ENCODE measurements at regions of chr19 and their contacts with region 1.

Region 1: DNA sequence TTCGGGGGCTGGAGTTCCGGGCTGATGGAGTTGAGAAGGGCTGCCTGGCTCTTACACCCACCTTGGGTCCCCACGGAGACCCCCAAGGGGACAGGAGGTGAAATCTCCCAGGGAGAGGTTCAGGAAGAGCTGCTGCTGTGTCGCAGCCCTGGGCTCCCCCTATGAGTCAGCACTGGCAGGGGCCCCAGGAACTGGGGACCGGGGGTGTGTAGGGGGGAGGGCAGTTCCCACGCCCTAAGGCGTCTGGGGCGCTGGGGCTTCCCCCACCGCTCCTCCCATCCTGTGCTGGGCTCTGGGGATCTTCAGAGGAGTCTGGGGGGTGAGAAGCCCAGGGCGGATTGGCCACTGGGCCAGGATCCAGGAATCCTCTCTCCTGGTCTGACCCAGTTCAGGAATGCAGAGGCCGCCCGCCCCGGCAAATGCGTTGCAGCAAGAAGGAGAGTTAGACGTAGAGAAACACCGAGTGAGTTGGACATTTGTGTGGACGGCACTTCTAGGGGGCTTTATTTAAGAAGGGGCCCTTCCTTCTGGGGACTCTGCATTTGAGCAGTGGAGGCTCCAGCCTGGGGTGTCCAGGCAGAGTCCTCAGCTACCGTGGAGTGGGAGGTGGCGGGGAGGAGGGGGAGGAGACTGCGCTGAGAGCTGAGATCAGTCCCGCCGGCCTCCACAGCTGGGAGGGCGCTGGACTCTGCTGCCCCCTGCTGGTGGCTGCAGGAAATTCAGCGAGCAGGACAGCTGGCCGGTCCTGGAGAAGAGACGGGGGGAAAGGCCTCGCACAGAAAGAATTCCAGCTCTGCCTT is 15.0 kb upstream of the NANOS3 start:
- DNase-seq: peak; percentile 90
- H3K4me3 ChIP-seq: peak overlapping the region; percentile 39 to 42 (median 40)
- H3K27ac ChIP-seq: peak overlapping the region; percentile 81
- H3K4me1 ChIP-seq: peaks cover 23% of the 10 kb centered on the region
- H3K27me3 ChIP-seq: peaks cover 2% of the 10 kb centered on the region
- CTCF ChIP-seq: peak; percentile 79 to 94

Region 2: DNA sequence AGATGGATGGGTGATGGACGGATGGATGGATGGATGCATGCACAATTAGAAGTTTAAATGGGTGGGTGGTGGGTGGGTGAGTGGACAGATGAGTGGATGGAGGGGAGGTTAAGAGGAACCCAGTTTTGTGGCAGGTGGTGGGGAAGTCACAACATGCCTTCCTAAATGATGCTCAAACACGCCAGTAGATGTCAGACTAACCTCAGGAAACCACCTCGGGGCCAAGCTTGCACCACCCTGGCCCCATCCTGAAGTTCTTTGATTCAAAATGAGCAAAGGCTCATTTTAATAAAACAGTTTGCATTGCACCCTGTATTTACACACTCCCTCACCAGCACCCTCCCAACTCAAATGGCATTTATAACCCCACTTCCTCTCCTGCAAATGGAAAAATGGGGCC is 264.3 kb before region 1 on chr19:
- CTCF ChIA-PET with region 1: no interaction called
- dilution Hi-C with region 1: no loop called
- in situ Hi-C with region 1: loop called (anchors 25 kb)
- intact Hi-C with region 1: loop called (anchors 1 kb)
- DNase-seq: peak; percentile 50
- H3K4me3 ChIP-seq: no peak overlapping the region
- H3K27ac ChIP-seq: no peak overlapping the region
- H3K4me1 ChIP-seq: no peaks in the 10 kb centered on the region
- H3K27me3 ChIP-seq: no peaks in the 10 kb centered on the region
- CTCF ChIP-seq: peak; percentile 44 to 69

Region 3: GRCh38 chr19:13707915-13708314 is 154.0 kb before region 1 on chr19:
- CTCF ChIA-PET with region 1: no interaction called
- dilution Hi-C with region 1: no loop called
- in situ Hi-C with region 1: no loop called
- intact Hi-C with region 1: no loop called
- DNase-seq: no peak
- H3K4me3 ChIP-seq: no peak overlapping the region
- H3K27ac ChIP-seq: no peak overlapping the region
- H3K4me1 ChIP-seq: peaks cover 7% of the 10 kb centered on the region
- H3K27me3 ChIP-seq: no peaks in the 10 kb centered on the region
- CTCF ChIP-seq: no peak

Region 4: DNA sequence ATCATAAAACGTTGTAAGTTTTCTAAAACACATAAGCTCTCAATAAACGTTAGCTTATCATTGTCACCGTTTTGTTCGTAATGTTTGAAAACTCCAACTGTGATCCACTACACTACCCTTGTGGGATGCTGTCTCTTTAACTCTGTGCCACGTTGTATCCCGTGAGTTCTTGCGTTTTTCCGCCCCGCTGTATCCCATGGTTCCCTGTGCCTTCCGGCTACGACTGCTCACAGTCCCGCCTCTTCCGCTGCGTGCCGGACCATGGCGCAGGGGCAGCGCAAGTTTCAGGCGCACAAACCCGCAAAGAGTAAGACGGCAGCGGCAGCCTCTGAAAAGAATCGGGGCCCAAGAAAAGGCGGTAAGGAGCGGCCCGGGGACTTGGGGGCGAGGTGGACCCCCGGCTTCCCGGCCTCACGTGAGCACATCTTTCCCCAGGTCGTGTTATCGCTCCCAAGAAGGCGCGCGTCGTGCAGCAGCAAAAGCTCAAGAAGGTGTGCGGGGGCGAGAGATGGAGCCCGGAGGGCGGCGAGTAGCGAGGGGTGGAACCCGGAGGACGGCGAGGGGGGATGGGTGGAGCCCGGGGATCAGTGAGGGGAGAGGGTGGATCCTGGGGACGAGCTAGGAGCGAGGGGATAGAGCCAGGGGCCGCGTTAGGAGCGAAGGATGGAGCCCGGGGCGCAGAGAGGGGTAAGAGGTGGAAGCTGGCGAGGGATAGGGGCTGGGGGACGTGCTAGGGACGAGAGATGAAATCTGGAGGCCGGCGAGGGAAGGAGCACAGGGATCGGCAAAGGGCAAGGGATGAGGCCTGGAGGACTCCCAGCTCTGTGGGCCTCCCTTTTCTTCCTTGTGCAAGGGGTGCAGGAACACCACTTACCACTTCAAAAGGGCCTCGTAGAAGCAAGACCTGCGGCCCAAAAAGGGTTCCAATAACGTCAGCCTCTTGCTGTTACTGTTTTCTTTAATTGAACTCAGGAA is 87.4 kb before region 1 on chr19 and contains the start of gene C19orf53:
- CTCF ChIA-PET with region 1: interaction called, 21 read pairs
- dilution Hi-C with region 1: no loop called
- in situ Hi-C with region 1: no loop called
- intact Hi-C with region 1: no loop called
- DNase-seq: peak; percentile 89
- H3K4me3 ChIP-seq: peak within 1 kb of the TSS; percentile 80 to 98 (median 84)
- H3K27ac ChIP-seq: peak within 1 kb of the TSS; percentile 76
- H3K4me1 ChIP-seq: no peaks in the 10 kb centered on the region
- H3K27me3 ChIP-seq: no peaks in the 10 kb centered on the region
- CTCF ChIP-seq: no peak
- total RNA-seq, gene C19orf53: 37.3 to 109 TPM

Region 5: GRCh38 chr19:13794757-13795589 is 67.0 kb before region 1 on chr19 and contains the start of gene ZSWIM4:
- CTCF ChIA-PET with region 1: no interaction called
- dilution Hi-C with region 1: no loop called
- in situ Hi-C with region 1: no loop called
- intact Hi-C with region 1: loop called (anchors 1 kb)
- DNase-seq: peak; percentile 100
- H3K4me3 ChIP-seq: peak within 1 kb of the TSS; percentile 79 to 87 (median 79)
- H3K27ac ChIP-seq: peak within 1 kb of the TSS; percentile 96
- H3K4me1 ChIP-seq: peaks cover 23% of the 10 kb centered on the region
- H3K27me3 ChIP-seq: no peaks in the 10 kb centered on the region
- CTCF ChIP-seq: no peak
- total RNA-seq, gene ZSWIM4: 3.2 to 5.4 TPM

Region 6: GRCh38 chr19:13842401-13843103 is 19.4 kb before region 1 on chr19:
- CTCF ChIA-PET with region 1: no interaction called
- dilution Hi-C with region 1: no loop called
- in situ Hi-C with region 1: no loop called
- intact Hi-C with region 1: loop called (anchors 1 kb)
- DNase-seq: peak; percentile 83
- H3K4me3 ChIP-seq: peak overlapping the region; percentile 73 to 91 (median 86)
- H3K27ac ChIP-seq: peak overlapping the region; percentile 98
- H3K4me1 ChIP-seq: peaks cover 40% of the 10 kb centered on the region
- H3K27me3 ChIP-seq: no peaks in the 10 kb centered on the region
- CTCF ChIP-seq: no peak

Region 7: GRCh38 chr19:14023404-14024235 is 161.7 kb after region 1 on chr19:
- CTCF ChIA-PET with region 1: no interaction called
- dilution Hi-C with region 1: no loop called
- in situ Hi-C with region 1: no loop called
- intact Hi-C with region 1: no loop called
- DNase-seq: peak; percentile 34
- H3K4me3 ChIP-seq: no peak overlapping the region
- H3K27ac ChIP-seq: no peak overlapping the region
- H3K4me1 ChIP-seq: no peaks in the 10 kb centered on the region
- H3K27me3 ChIP-seq: no peaks in the 10 kb centered on the region
- CTCF ChIP-seq: peak; percentile 50 to 51